ENCODE measurements at regions of chr11 and their contacts with region 1.

Region 1: DNA sequence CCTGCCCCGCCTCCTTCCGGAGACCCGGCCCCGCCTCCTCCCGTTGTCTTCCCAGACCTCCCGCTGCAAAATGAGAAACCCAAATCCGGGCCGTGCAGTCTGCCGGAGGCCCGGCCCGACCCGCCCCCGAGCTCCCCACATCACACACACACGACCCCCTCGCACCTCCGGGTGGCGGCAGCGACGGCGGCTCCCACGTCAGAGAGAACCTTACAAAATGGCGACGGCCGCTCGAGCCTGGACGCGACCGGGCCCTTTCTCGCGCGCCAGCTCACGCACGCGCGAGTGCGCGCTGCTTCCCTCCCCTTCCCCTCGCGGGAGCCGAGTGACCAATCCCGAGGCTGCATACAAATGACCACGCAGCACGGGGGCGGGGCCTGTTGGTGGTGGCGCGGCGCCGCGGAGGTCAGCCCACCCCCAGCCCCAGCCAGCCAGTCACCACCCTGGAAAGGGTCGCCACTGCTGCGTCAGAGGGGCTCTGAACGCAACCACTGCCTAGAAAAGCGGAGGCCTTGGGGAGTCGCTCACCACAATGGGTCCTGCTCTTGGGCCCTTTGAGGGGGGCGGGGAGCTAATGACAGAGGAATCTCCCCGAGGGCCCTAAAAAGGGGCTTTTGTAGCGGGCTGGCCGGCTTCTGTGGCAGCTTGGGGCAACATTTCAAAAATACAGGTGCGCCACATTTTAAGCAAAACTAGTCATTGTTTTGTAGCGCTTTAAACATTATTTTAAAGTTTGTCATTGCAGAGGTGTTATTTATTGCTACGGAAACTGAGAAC is at the start of gene RBM4B:
- DNase-seq: peak; percentile 98
- ATAC-seq: peak; percentile 98 to 99
- total RNA-seq, gene RBM4B: 8.0 to 13.8 TPM

Region 2: GRCh38 chr11:66579017-66579606 is 98.7 kb before region 1 on chr11:
- intact Hi-C with region 1: loop called (anchors 1 to 2 kb)
- DNase-seq: peak; percentile 88
- ATAC-seq: peak; percentile 92 to 96

Measured in left cardiac atrium (tissue), 4 donors.